Dorsolateral prefrontal cortex (tissue), 120 donors: ENCODE measurements at regions of chr3 and their contacts with region 1.

Region 1: DNA sequence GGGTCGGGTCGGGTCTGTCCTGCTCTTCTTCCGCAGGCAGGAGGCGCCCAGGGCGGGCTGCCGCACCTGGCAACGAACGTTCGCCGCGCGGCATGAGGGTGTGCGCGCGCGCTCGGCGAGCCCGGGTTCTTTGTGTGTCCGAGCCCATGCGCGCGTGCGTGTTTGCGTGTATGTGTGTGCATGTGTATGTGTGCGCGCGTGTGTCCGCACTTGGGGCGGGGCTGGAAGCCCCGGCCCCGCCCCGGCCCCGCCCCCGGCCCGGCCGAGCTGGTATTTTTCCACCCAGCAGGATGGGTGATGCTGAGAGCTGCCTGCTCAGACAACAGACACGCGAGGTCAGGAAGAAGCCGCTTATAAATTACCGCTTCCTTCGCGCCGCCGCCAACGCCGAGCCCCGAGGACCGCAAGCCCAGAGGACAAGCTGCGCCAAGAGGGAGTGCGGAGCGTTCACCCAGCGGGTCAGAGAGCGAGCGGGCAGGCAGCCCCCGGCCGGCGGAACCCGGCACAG is at the start of gene SLC6A6:
- DNase-seq: peak; percentile 91 to 96 (median 94)
- H3K4me3 ChIP-seq: peak within 1 kb of the TSS; percentile 55 to 96 (median 82)
- H3K27ac ChIP-seq: peak within 1 kb of the TSS in 57 of 59 donors; percentile 69 to 96 (median 87)
- H3K27me3 ChIP-seq: no peaks in the 10 kb centered on the region
- CTCF ChIP-seq: peak in 50 of 56 donors; percentile 4 to 62 (median 36)
- total RNA-seq, gene SLC6A6: 17.9 to 78.1 (median 30.7) TPM

Region 2: GRCh38 chr3:14261229-14261628 is 141.1 kb before region 1 on chr3:
- intact Hi-C with region 1: loop called (anchors 5 to 10 kb)
- DNase-seq: peak; percentile 76 to 92 (median 86)
- H3K4me3 ChIP-seq: no peak overlapping the region
- H3K27ac ChIP-seq: no peak overlapping the region
- H3K27me3 ChIP-seq: no peaks in the 10 kb centered on the region
- CTCF ChIP-seq: peak; percentile 88 to 99 (median 97)

Region 3: DNA sequence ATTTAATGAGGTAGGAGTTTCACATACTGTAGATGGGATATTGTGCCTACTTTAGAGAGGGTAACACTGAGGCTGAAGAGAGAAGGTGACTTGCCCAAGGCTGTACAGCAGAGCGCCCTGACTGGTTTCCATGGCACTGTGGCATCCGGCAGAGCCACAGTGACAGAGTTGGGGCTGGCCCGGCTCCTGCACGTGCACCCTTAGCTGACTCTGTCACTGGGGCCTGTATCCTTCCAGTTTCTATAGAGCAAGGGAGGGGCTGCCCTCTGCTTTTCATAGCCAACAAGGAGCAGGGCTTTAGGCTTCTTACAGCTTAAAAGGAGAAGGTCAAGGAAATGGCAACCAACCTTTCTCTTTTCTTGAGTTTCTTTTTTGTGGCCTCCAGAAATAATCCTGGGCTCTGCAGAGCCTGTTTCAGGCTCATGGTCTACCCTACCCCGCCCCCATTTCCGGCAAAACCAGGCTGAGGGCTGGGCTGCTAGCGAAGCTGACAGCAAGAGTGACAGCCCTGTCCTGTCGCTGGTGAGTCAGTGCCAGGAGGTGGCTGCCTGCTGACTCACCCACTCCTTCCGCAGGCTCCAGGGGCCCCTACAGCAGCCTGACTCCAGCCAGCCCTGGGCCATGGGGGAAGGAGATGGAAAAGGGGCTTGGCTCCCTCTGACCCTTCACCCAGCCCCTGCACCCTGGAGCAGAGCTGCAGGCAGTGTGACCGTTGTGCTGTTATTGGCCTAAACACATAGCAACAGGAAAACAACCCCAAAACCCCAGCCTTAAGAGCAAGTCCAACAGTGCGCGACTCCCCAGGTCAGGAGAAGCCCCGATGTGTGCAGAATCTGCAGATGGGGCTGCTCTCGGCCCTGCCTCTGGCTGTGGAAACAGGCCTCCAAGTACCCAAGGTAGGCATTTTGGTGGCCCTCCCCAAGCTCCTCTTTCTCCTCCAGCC is 29.8 kb after region 1 on chr3:
- intact Hi-C with region 1: loop called in 1 of 2 experiments (anchors 1 kb)
- DNase-seq: peak in 9 of 10 donors; percentile 66 to 97 (median 87)
- H3K4me3 ChIP-seq: peak overlapping the region in 7 of 59 donors; percentile 7 to 31 (median 15)
- H3K27ac ChIP-seq: peak overlapping the region; percentile 35 to 96 (median 88)
- H3K27me3 ChIP-seq: no peaks in the 10 kb centered on the region
- CTCF ChIP-seq: peak in 4 of 56 donors; percentile 8 to 23 (median 14)

Region 4: DNA sequence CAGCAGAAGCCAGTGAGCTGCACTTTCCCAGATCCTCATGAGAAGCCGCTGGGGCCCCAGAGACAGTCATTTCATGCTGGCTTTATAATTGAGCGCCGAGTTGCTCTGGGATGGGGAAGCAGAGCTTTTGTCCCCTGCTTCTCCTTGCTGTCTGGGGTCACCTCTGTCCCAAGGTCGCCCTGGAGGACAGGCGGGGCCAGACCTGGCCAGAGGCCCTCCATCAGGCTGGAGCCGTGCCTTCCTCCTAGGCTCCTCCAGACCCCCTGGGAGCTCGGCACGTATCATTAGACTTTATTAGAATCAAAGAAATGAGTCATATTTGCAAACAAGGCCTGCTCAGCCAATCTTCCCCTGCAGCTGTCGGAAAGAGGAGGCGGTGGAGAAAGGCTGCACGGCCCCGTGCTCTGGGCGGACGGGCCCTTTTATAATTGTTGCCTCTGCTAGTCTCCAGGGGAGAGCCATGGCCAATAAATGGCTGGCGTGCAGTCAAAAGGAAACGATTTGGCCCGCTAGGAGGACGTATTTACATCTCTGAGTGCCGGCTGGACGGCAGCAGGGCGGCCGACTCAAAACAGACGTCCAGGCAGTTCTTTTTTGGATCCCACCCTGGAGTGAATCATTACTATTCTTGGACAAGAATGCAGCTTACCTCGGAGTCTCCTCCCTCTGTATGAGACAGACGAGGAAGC is 50.5 kb after region 1 on chr3:
- intact Hi-C with region 1: loop called in 1 of 2 experiments (anchors 5 kb)
- DNase-seq: peak; percentile 35 to 87 (median 82)
- H3K4me3 ChIP-seq: peak overlapping the region in 5 of 59 donors; percentile 8 to 19 (median 10)
- H3K27ac ChIP-seq: peak overlapping the region; percentile 75 to 99 (median 92)
- H3K27me3 ChIP-seq: no peaks in the 10 kb centered on the region
- CTCF ChIP-seq: peak in 26 of 56 donors; percentile 8 to 40 (median 29)

Region 5: DNA sequence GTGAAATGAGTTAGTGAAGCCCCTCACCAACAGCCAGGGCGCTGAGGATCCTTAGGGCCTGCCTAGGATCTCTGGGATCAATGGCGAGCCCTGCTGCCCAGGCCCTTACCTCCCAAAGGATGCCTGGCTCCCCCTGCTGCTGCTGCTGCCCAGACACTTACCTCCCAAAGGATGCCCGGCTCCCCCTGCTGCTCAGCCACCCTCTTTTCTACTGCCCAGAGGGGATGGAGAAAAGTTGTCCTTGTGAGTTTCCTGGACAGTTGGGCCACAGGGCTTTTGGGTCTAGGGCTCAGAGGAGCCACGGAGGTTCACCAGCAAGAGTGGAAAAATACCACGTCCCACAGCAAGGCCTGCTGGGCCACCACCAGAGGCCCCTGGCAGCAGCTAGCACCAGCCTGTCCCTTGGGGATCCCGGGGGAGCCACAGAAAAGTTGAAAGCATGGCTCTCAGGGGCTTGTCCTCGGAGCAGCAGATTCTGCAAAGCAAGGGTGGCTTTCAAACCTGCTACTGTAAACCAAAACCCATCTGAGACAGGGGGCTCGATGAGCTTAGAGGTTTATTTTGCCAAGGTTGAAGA is 59.5 kb after region 1 on chr3:
- intact Hi-C with region 1: loop called in 1 of 2 experiments (anchors 2 kb)
- DNase-seq: peak in 8 of 10 donors; percentile 45 to 72 (median 60)
- H3K4me3 ChIP-seq: no peak overlapping the region
- H3K27ac ChIP-seq: peak overlapping the region in 22 of 59 donors; percentile 13 to 88 (median 76)
- H3K27me3 ChIP-seq: no peaks in the 10 kb centered on the region
- CTCF ChIP-seq: peak in 53 of 56 donors; percentile 33 to 73 (median 59)